Activated CD4-positive, alpha-beta memory T cell treated with anti-CD3 and anti-CD28 coated beads for 36 hours (primary cell): ENCODE measurements at regions of chr7 and their contacts with region 1.

Region 1: GRCh38 chr7:22001345-22002004 is 55.8 kb upstream of the CDCA7L start:
- DNase-seq: no peak
- H3K4me3 Mint-ChIP-seq: no peak overlapping the region
- H3K27ac Mint-ChIP-seq: no peak overlapping the region
- H3K4me1 Mint-ChIP-seq: peaks cover 2% of the 10 kb centered on the region
- H3K27me3 Mint-ChIP-seq: no peaks in the 10 kb centered on the region

Region 2: GRCh38 chr7:20786779-20787659 is 1214.5 kb before region 1 on chr7 and contains the start of gene SP8:
- CTCF ChIA-PET with region 1: no interaction called
- POLR2A ChIA-PET with region 1: no interaction called
- intact Hi-C with region 1: loop called (anchors 10 kb)
- DNase-seq: peak; percentile 43
- H3K4me3 Mint-ChIP-seq: peak within 1 kb of the TSS; percentile 53
- H3K27ac Mint-ChIP-seq: peak within 1 kb of the TSS; percentile 40
- H3K4me1 Mint-ChIP-seq: peaks cover 26% of the 10 kb centered on the region
- H3K27me3 Mint-ChIP-seq: peaks cover 73% of the 10 kb centered on the region
- total RNA-seq, gene SP8: not detected

Region 3: DNA sequence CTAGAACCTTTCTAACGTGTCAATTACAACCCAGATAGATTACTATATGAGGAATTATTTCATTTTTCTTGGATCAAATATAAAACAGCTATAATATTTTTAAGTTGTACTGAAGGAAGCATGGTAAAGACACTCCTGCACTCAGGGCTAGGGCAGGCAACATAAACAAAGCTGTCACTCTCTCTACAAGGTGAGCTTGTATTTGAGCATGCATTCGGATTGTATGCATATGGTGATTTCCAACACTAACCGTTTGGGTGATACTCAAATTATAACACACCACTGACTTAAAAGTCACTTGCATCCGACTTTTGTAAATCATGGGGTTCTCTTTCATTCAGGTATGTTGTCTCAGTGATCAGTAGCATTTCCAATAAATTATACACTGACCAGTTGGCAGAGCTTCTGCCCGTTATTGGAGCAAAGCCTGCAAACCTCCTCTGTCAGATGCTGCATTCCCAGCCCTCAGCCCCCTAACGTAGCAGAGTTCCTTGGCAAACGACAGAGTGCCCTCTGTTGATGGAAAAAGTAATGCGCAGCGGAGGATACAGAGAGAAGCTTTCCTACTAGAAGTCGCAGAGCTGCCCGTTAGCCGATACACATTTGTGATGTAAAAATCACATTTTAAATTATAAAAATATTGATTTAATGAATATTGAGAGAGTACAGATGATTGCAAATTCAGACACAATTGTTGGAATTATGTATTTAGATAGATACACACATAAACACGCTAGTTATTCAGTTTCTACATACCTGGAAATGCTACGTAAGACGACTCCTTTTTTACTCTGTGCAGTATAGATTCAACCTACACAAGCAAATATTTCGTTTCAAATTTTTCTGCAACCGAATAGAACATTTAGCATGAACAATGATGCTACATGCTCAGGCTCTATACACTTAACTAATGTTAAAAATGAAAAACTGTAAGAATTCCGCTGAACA is 747.5 kb before region 1 on chr7:
- CTCF ChIA-PET with region 1: interaction called, 5 read pairs
- POLR2A ChIA-PET with region 1: no interaction called
- intact Hi-C with region 1: loop called (anchors 1 kb)
- DNase-seq: peak; percentile 56
- H3K4me3 Mint-ChIP-seq: no peak overlapping the region
- H3K27ac Mint-ChIP-seq: no peak overlapping the region
- H3K4me1 Mint-ChIP-seq: peaks cover 1% of the 10 kb centered on the region
- H3K27me3 Mint-ChIP-seq: peaks cover 51% of the 10 kb centered on the region

Region 4: DNA sequence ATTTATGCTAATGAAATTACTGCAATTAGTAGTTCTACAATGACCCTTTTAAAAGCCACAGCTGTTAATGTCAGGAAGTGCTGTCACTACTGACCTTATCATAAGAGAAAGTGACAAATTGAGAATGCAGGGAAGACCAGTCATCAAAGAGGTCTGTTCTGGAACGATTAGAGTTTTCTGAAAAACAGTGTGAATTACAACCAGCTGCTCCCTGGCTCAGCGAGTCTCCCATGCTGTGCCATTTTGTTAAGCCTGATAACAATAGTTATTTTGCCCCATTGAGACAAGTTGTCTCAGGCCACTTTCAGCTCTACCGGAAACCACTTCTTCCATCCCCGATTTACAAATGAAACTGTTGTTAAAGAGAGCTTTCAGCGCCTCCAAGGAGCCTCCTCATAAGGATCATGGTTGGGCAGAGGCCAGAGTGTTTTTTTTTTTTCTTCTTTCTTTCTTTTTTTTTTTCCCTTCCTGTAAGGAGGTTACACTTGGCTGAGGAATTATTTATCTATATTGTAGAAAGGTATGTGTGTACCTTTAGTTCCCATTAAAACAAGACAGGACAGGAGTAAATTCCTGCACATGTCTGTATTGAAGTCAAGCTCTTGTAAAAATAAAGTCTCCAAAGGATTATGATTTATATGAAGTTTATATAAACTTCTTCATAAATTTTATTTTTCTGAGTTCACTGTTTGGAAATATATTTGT is 229.4 kb before region 1 on chr7:
- CTCF ChIA-PET with region 1: interaction called, 3 read pairs
- POLR2A ChIA-PET with region 1: no interaction called
- intact Hi-C with region 1: loop called (anchors 10 kb)
- DNase-seq: no peak
- H3K4me3 Mint-ChIP-seq: no peak overlapping the region
- H3K27ac Mint-ChIP-seq: no peak overlapping the region
- H3K4me1 Mint-ChIP-seq: no peaks in the 10 kb centered on the region
- H3K27me3 Mint-ChIP-seq: peaks cover 13% of the 10 kb centered on the region

Region 5: GRCh38 chr7:21886396-21886795 is 115.1 kb before region 1 on chr7:
- CTCF ChIA-PET with region 1: no interaction called
- POLR2A ChIA-PET with region 1: no interaction called
- intact Hi-C with region 1: loop called (anchors 10 kb)
- DNase-seq: no peak
- H3K4me3 Mint-ChIP-seq: no peak overlapping the region
- H3K27ac Mint-ChIP-seq: no peak overlapping the region
- H3K4me1 Mint-ChIP-seq: no peaks in the 10 kb centered on the region
- H3K27me3 Mint-ChIP-seq: no peaks in the 10 kb centered on the region

Region 6: GRCh38 chr7:21945454-21946227 is 55.8 kb before region 1 on chr7 and contains the start of gene CDCA7L:
- CTCF ChIA-PET with region 1: interaction called, 3 read pairs
- POLR2A ChIA-PET with region 1: no interaction called
- intact Hi-C with region 1: loop called (anchors 2 kb)
- DNase-seq: peak; percentile 81
- H3K4me3 Mint-ChIP-seq: peak within 1 kb of the TSS; percentile 87
- H3K27ac Mint-ChIP-seq: peak within 1 kb of the TSS; percentile 73
- H3K4me1 Mint-ChIP-seq: peaks cover 54% of the 10 kb centered on the region
- H3K27me3 Mint-ChIP-seq: peaks cover 7% of the 10 kb centered on the region
- total RNA-seq, gene CDCA7L: 62.5 to 70.4 TPM

Region 7: DNA sequence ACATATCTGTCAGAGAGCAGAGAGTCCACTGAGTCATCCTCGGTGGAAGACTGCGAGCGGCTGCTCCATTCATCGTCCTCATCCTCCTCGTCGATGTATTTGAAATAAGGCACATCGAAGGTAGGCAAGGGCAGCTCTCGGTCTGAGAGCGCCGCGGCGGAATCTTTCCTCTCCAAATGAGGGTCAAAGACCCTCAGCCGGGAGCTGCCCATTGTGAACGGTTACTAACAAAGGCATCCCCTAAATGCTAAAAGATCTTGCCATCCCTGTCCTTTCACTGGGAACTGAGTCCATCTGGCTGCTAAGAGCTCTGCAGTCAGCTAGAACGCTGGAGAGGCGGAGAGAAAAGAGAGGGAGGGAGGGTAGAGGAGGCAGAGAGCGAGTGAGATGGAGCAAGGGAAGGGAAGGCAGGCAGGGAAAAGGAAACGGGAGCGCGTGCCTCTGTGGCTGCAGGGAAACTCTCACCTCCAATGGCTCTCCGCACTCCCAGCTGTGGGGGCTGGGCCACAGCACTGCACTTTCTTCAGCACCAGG is 192.0 kb after region 1 on chr7:
- CTCF ChIA-PET with region 1: no interaction called
- POLR2A ChIA-PET with region 1: no interaction called
- intact Hi-C with region 1: no loop called
- DNase-seq: no peak
- H3K4me3 Mint-ChIP-seq: no peak overlapping the region
- H3K27ac Mint-ChIP-seq: no peak overlapping the region
- H3K4me1 Mint-ChIP-seq: no peaks in the 10 kb centered on the region
- H3K27me3 Mint-ChIP-seq: peaks cover 4% of the 10 kb centered on the region